ENCODE measurements at regions of chrX and their contacts with region 1.

Region 1: GRCh38 chrX:72540318-72540717 is 32.3 kb downstream of the HDAC8 start:
- DNase-seq: peak; percentile 7
- H3K4me3 ChIP-seq: no peak overlapping the region
- H3K27ac ChIP-seq: no peak overlapping the region
- H3K4me1 ChIP-seq: no peaks in the 10 kb centered on the region
- CTCF ChIP-seq: peak; percentile 61

Region 2: DNA sequence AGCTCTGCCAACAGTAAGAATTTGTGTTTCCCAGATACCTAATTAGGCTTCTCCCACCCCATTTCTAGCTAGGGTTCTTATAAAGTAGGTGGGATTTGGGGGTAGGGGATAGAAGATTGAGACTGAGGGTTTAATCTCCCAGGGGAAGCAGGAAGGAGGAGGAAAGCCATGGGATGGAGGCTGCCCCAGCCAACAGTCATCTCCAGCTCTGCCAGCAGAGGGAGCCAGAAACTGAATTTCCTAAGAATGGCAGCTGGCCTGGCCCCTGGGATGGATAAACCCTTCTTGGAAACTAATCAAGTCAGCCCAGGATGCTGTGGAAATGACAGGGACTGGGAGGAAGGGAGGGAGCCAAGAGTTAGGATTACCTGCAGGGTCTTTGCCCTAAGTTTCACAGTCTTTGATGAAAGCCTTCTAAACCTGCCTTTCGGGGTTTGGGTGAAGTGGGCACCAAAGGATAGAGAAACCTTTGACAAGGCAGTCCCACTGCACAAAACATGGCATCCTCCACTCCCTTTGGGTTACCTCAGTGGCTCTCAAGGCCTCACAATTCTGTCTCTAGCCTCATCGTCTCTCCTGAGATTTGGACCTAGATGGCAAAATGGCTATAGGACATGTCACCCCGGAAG is 294.7 kb before region 1 on chrX:
- CTCF ChIA-PET with region 1: no interaction called
- POLR2A ChIA-PET with region 1: no interaction called
- intact Hi-C with region 1: loop called (anchors 5 kb)
- DNase-seq: peak; percentile 31
- H3K4me3 ChIP-seq: no peak overlapping the region
- H3K27ac ChIP-seq: no peak overlapping the region
- H3K4me1 ChIP-seq: no peaks in the 10 kb centered on the region
- CTCF ChIP-seq: peak; percentile 78

Region 3: GRCh38 chrX:72685810-72686463 is 145.6 kb after region 1 on chrX:
- CTCF ChIA-PET with region 1: no interaction called
- POLR2A ChIA-PET with region 1: no interaction called
- intact Hi-C with region 1: no loop called
- DNase-seq: no peak
- H3K4me3 ChIP-seq: no peak overlapping the region
- H3K27ac ChIP-seq: no peak overlapping the region
- H3K4me1 ChIP-seq: no peaks in the 10 kb centered on the region
- CTCF ChIP-seq: no peak